ENCODE measurements at regions of chr12 and their contacts with region 1.

Region 1: DNA sequence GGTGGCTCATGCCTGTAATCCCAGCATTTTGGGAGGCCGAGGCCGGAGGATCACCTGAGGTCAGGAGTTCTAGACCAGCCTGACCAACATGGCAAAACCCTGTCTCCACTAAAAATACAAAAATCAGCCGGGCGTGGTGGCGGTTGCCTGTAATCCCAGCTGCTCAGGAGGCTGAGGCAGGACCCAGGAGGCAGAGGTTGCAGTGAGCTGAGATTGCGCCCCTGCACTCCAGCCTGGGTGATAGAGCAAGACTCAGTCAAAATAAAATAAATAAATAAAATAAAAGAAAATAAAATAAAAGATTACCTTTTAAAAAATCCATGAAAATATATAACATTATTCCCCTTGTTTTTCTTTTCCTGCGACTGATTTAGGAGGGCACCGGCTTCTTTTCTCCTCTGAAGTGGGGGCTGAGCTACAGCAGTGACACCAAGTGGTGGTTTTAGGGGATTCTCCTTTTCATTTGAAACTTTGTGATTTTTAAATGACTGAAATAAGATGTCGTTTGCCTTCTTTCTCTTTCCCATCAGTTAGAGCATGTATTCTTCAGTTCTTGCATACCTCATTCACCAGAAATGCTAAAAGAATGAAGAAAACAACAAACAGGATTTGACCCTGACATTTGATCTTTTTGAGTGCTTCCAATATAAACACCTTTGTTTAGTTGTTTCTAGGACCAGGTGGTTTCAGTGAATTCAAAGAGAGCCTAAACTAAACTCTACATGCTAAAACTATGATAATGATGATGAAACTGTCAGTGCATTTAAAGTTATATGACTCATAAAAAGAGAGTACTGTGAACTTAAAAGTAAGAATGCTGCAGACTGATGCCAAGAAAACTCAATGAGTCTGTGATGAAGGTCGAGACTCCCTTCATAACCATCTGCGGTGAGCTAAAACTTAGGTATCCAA is 22.6 kb upstream of the PKP2 start:
- DNase-seq: peak in 3 of 4 donors; percentile 15 to 25 (median 23)
- ATAC-seq: peak; percentile 58
- H3K4me3 ChIP-seq: no peak overlapping the region
- H3K27ac ChIP-seq: no peak overlapping the region
- H3K4me1 ChIP-seq: no peaks in the 10 kb centered on the region
- H3K27me3 ChIP-seq: no peaks in the 10 kb centered on the region
- CTCF ChIP-seq: peak; percentile 39 to 71 (median 66)
- POLR2A ChIP-seq: peak in 1 of 3 donors; percentile 7

Region 2: DNA sequence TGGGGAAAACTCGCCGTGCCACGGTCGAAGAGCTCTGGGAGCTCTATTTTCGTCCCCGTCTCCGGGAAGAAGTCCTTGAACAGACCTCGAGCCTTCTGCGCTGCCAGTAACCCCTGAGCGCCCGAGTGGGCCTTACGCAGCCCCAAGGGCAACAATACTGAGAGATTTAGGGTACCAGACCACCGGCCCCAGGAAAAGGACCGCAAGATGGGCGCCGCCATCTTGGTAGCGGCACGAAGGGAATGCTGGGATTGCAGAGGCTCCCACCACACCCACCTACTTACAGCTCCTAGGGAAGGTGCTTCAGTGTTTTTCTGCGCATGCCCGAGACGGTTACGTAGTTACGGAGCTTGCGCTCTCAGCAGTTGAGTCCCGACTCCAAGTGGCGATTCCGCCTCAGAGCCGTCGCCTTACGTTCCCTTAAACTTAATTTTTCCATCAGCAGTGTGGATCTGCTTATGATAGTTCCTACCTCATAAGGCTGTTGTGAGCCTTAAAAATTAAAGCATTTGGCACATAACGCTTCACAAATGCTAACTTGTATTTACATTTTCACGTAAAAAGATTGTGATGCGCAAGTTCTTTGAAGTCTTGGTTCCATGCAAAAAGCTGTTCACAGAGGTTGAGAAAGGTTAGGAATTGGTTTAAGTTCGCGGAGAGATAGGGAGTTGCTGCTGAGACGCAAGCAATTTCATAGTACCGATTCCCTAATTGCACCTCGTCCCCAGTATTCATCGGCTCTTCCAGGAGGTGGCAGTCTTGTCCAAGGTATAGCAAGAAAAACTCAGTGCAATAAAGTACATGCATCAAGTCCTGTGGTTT is 163.3 kb before region 1 on chr12 and contains the start of gene YARS2:
- intact Hi-C with region 1: loop called (anchors 5 kb)
- DNase-seq: peak; percentile 95 to 98 (median 98)
- ATAC-seq: peak; percentile 99
- H3K4me3 ChIP-seq: peak within 1 kb of the TSS; percentile 86 to 98
- H3K27ac ChIP-seq: peak within 1 kb of the TSS; percentile 65 to 92 (median 80)
- H3K4me1 ChIP-seq: peaks cover 21% of the 10 kb centered on the region
- H3K27me3 ChIP-seq: no peaks in the 10 kb centered on the region
- CTCF ChIP-seq: peak; percentile 54 to 96 (median 91)
- POLR2A ChIP-seq: peak; percentile 39 to 88 (median 82)
- total RNA-seq, gene YARS2: 8.6 to 16.9 TPM

Region 3: DNA sequence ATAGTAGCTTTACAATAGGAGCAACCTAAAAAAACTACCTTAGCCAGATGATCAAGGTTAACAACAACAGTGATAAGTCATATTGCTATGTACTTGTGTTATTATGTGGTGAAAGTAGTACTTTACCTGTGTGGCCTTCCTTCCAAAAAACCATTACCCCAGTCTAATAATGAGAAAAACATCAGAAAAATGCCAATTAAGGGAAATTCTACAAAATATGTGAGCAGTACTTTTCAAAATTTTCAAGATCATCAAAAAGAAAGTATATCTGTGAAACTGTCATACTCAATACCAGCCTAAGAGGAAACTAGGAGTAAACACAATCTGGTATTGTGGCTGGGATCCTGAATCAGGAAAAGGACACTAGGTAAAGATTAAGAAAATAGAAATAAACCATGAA is 142.7 kb after region 1 on chr12:
- intact Hi-C with region 1: no loop called
- DNase-seq: no peak
- ATAC-seq: no peak
- H3K4me3 ChIP-seq: no peak overlapping the region
- H3K27ac ChIP-seq: no peak overlapping the region
- H3K4me1 ChIP-seq: no peaks in the 10 kb centered on the region
- H3K27me3 ChIP-seq: no peaks in the 10 kb centered on the region
- CTCF ChIP-seq: no peak
- POLR2A ChIP-seq: no peak